ENCODE measurements at regions of chr1 and their contacts with region 1.

Region 1: DNA sequence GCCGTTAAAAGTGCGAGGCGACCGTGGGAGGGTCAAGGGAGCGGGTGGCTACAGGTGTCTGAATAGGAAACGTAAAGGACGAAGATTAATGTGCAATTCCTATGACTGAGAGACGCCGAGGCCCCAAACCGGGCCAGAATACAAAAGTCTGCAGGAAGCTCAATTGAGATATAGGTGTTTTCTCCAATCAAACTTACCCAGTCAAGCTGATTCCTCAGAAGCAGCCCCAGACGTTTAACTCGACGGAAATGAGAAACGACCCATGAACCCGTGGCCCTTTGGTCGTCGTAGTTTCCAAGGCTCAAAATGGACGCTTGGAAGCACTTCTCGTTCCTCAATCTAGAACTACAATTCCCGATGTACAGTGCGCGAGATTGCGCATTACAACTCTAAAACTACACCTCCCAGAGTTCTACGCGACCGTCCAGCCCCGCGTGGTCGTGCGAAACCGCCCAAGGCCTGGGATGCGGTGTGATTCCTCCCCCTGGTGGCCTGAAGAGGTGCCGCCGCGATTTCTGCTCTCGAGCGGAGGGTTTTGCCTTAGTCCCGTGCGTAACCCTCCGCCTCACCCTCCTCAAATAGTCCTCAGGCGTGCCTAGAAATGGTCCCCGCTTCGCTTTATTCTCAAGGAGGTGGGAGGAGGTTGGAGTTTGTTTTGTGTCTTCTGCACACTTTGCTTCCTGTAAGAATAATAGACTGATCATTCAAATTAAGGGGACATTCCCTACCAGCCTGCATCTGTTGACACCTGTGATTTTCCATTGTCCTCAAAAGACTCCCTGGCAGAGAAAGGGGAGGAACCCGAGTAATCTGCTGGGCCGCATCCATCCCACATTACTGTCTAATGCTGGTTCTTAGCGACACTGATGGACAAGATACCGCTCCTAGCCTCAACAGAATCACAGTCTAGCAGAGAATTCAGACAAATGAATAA is at the start of gene PAFAH2:
- DNase-seq: peak; percentile 99
- H3K4me3 Mint-ChIP-seq: peak within 1 kb of the TSS; percentile 97
- H3K27ac Mint-ChIP-seq: peak within 1 kb of the TSS; percentile 94
- H3K4me1 Mint-ChIP-seq: peaks cover 20% of the 10 kb centered on the region
- H3K27me3 Mint-ChIP-seq: no peaks in the 10 kb centered on the region
- total RNA-seq, gene PAFAH2: 4.7 to 5.2 TPM

Region 2: GRCh38 chr1:25239681-25240541 is 758.2 kb before region 1 on chr1:
- CTCF ChIA-PET with region 1: no interaction called
- intact Hi-C with region 1: loop called (anchors 10 kb)
- DNase-seq: peak; percentile 96
- H3K4me3 Mint-ChIP-seq: peak overlapping the region; percentile 91
- H3K27ac Mint-ChIP-seq: peak overlapping the region; percentile 99
- H3K4me1 Mint-ChIP-seq: peaks cover 48% of the 10 kb centered on the region
- H3K27me3 Mint-ChIP-seq: no peaks in the 10 kb centered on the region

Region 3: GRCh38 chr1:25616095-25616986 is 381.8 kb before region 1 on chr1 and contains the start of gene MAN1C1:
- CTCF ChIA-PET with region 1: no interaction called
- intact Hi-C with region 1: no loop called
- DNase-seq: peak; percentile 72
- H3K4me3 Mint-ChIP-seq: peak within 1 kb of the TSS; percentile 88
- H3K27ac Mint-ChIP-seq: no peak within 1 kb of the TSS
- H3K4me1 Mint-ChIP-seq: peaks cover 52% of the 10 kb centered on the region
- H3K27me3 Mint-ChIP-seq: peaks cover 1% of the 10 kb centered on the region
- total RNA-seq, gene MAN1C1: 4.9 to 6.3 TPM

Region 4: DNA sequence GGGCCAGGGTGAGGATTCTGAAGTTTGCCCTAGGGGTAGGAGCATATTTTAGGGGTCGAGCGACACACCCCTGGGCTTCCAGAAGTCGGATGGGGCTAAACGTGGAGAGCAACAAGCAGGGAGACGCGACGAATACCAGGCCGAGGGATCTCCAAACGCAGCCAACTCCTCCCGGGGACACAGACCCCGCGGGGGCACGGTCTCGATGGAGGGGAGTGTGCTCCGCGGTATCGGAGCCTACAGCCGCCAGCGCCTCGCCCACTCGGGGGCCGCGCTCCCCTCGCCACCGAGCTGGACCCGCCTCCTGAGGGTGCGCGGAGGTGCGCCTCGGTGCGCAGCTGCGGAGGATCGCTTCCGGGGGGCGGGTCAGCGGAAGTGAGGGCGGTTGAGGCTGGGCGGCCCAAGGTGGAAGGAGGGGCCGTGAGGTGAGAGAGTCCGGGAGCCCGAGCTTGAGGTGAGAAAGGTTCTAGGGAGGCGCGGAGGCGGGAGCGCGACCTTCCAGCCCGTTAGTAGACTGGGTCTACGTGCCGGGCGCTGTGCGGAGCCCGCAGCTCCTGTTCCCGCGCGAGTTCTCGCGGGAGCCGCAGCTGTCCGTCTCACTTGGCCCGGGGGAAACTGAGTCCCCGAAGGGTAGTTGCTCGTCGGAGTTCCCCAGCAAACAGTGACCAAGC is 178.4 kb before region 1 on chr1 and contains the start of gene MTFR1L:
- CTCF ChIA-PET with region 1: interaction called, 5 read pairs
- intact Hi-C with region 1: loop called (anchors 1 kb)
- DNase-seq: peak; percentile 94
- H3K4me3 Mint-ChIP-seq: peak within 1 kb of the TSS; percentile 86
- H3K27ac Mint-ChIP-seq: peak within 1 kb of the TSS; percentile 88
- H3K4me1 Mint-ChIP-seq: peaks cover 36% of the 10 kb centered on the region
- H3K27me3 Mint-ChIP-seq: no peaks in the 10 kb centered on the region
- total RNA-seq, gene MTFR1L: 22.2 to 23.5 TPM

Region 5: GRCh38 chr1:25858906-25859789 is 138.9 kb before region 1 on chr1 and contains the start of gene AUNIP:
- CTCF ChIA-PET with region 1: no interaction called
- intact Hi-C with region 1: loop called (anchors 1 kb)
- DNase-seq: peak; percentile 92
- H3K4me3 Mint-ChIP-seq: peak within 1 kb of the TSS; percentile 92
- H3K27ac Mint-ChIP-seq: peak within 1 kb of the TSS; percentile 87
- H3K4me1 Mint-ChIP-seq: peaks cover 15% of the 10 kb centered on the region
- H3K27me3 Mint-ChIP-seq: no peaks in the 10 kb centered on the region
- total RNA-seq, gene AUNIP: 8.4 to 9.1 TPM

Region 6: GRCh38 chr1:25905680-25906643 is 92.1 kb before region 1 on chr1 and contains the start of gene STMN1:
- CTCF ChIA-PET with region 1: interaction called, 19 read pairs
- intact Hi-C with region 1: loop called (anchors 1 kb)
- DNase-seq: peak; percentile 94
- H3K4me3 Mint-ChIP-seq: peak within 1 kb of the TSS; percentile 94
- H3K27ac Mint-ChIP-seq: peak within 1 kb of the TSS; percentile 90
- H3K4me1 Mint-ChIP-seq: peaks cover 29% of the 10 kb centered on the region
- H3K27me3 Mint-ChIP-seq: no peaks in the 10 kb centered on the region
- total RNA-seq, gene STMN1: 708 to 746 TPM

Region 7: DNA sequence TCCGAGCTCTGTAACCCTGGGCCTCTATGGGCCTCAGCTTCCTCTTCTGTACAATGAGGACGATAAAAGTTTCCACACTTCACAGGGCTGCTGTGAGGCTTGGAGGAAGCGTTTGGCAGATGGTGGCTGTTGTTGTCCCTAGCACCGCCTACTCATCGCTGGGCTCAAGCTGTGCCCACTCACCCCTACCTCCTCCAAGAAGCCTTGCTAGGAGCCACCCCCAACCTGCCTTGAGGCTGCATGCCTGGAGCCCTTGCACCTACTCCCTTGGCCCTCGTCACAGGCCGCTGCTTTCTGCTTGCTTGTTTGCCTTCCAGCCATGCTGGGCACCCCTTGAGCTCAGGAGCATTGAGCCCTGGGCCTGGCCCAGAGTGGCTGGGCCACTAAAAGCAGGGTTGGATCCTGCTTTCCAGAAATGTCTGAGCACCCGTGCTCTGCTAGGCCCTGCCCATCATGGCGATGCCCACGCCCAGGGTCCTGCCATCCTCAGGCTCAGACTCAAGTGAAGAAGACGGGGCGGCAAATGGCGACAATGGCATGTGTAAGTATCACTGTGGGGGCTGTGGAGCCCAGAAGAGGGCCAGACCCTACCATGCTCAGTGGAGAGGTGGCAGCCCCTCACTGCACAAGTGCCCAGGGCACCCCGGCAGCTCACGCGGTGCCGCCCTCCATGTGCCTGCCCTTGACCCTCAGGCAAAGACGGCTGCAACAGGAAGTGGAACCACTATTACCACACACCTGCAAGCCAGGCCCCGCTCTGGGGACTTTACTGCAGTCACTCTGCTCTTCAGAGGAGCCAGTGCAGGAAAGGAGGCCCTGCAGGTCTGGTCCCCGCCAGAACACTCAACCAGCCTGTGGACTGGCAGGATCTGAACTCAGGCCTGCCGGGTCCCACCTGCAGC is 291.3 kb after region 1 on chr1:
- CTCF ChIA-PET with region 1: no interaction called
- intact Hi-C with region 1: no loop called
- DNase-seq: peak; percentile 66
- H3K4me3 Mint-ChIP-seq: no peak overlapping the region
- H3K27ac Mint-ChIP-seq: peak overlapping the region; percentile 94
- H3K4me1 Mint-ChIP-seq: peaks cover 76% of the 10 kb centered on the region
- H3K27me3 Mint-ChIP-seq: no peaks in the 10 kb centered on the region

Measured in activated naive CD4-positive, alpha-beta T cell treated with anti-CD3 and anti-CD28 coated beads for 36 hours (primary cell).